GM12878 (cell line): ENCODE measurements at regions of chr16 and their contacts with region 1.

Region 1: GRCh38 chr16:15427648-15428239 is 6.6 kb upstream of the BMERB1 start:
- DNase-seq: no peak
- ATAC-seq: peak; percentile 78
- H3K4me3 ChIP-seq: no peak overlapping the region
- H3K27ac ChIP-seq: no peak overlapping the region
- H3K4me1 ChIP-seq: no peaks in the 10 kb centered on the region
- H3K27me3 ChIP-seq: no peaks in the 10 kb centered on the region
- CTCF ChIP-seq: peak; percentile 41 to 61 (median 52); a peak in 5 of 6 replicates
- EP300 ChIP-seq: no peak
- POLR2A ChIP-seq: no peak
- RAD21 ChIP-seq: peak; percentile 58

Region 2: DNA sequence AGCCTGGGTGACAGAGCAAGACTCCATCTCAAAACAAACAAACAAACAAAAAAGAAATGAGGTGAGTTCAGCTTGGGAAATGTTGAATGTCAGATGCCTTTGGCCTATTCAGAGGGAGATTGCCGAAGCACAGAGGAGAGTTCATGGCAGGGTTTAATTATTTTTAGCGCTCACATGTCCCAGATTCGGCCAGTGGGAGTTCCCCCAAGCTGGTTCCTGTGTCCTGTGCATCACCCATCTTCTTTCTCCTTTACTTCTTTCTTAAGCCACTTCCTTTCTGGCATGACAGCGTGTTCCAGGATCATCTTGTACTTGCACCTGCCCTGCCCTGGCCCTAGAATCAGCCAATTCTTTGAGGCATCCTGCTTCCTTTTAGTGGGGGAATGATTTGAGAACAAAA is 23.0 kb before region 1 on chr16:
- CTCF ChIA-PET with region 1: no interaction called
- POLR2A ChIA-PET with region 1: no interaction called
- RAD21 ChIA-PET with region 1: no interaction called
- SMC1A ChIA-PET with region 1: no interaction called
- in situ Hi-C with region 1: no loop called
- intact Hi-C with region 1: no loop called
- DNase-seq: no peak
- ATAC-seq: peak; percentile 73
- H3K4me3 ChIP-seq: no peak overlapping the region
- H3K27ac ChIP-seq: peak overlapping the region; percentile 8; the same call in 1 of the 2 replicates
- H3K4me1 ChIP-seq: peaks cover 10% of the 10 kb centered on the region
- H3K27me3 ChIP-seq: no peaks in the 10 kb centered on the region
- CTCF ChIP-seq: no peak
- EP300 ChIP-seq: no peak
- POLR2A ChIP-seq: no peak
- RAD21 ChIP-seq: no peak

Region 3: DNA sequence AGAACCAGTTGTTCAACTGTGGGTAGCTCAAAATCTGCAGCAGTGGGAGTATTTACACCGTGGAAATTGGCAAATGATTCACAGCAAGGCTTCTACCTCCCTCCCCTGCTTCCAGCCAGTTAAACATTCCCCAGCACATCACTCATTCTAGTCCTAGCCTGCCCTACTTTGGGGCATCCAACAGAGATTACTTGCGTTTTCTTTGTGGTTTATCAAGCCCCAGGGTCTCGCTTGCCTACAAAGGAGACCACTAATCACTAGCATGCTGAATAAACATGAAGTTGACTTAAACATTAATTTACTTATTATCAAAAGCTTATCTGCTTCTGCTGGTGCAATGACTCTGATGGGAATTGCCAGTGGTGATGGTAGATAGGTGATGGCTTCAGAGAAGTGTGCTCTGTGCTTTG is 120.7 kb after region 1 on chr16:
- CTCF ChIA-PET with region 1: interaction called, 15 read pairs
- POLR2A ChIA-PET with region 1: no interaction called
- RAD21 ChIA-PET with region 1: interaction called, 3 read pairs
- SMC1A ChIA-PET with region 1: interaction called, 5 read pairs
- in situ Hi-C with region 1: no loop called
- intact Hi-C with region 1: loop called (anchors 1 kb)
- DNase-seq: peak; percentile 15
- ATAC-seq: peak; percentile 43
- H3K4me3 ChIP-seq: no peak overlapping the region
- H3K27ac ChIP-seq: no peak overlapping the region
- H3K4me1 ChIP-seq: no peaks in the 10 kb centered on the region
- H3K27me3 ChIP-seq: no peaks in the 10 kb centered on the region
- CTCF ChIP-seq: no peak
- EP300 ChIP-seq: no peak
- POLR2A ChIP-seq: no peak
- RAD21 ChIP-seq: no peak

Region 4: DNA sequence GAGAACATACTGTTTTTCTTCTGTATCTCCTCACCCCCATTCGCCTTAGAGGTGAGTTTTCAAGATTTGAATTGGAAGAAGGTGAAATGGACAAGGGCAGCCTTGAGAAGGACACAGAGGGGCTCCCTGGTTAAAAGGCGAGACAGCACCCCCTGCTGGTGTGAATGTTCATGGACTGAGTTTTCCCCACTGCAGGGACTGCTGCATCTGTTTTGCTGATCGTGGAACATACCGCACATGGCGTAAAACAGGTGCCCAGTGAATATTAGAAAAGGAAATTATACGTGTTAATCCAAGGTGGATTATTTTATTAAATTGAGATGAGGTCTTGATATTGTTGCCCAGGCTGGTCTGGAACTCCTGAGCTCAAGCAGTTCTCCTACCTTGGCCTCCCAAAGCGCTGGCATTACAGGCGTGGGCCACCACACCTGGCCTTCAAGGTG is 276.8 kb after region 1 on chr16:
- CTCF ChIA-PET with region 1: interaction called, 5 read pairs
- POLR2A ChIA-PET with region 1: no interaction called
- RAD21 ChIA-PET with region 1: no interaction called
- SMC1A ChIA-PET with region 1: no interaction called
- in situ Hi-C with region 1: no loop called
- intact Hi-C with region 1: loop called (anchors 10 kb)
- DNase-seq: no peak
- ATAC-seq: peak; percentile 92
- H3K4me3 ChIP-seq: no peak overlapping the region
- H3K27ac ChIP-seq: no peak overlapping the region
- H3K4me1 ChIP-seq: no peaks in the 10 kb centered on the region
- H3K27me3 ChIP-seq: no peaks in the 10 kb centered on the region
- CTCF ChIP-seq: peak; percentile 76 to 80 (median 79)
- EP300 ChIP-seq: no peak
- POLR2A ChIP-seq: peak; percentile 9; the same call in 1 of the 2 replicates
- RAD21 ChIP-seq: peak; percentile 69

Region 5: GRCh38 chr16:15757630-15758251 is 330.0 kb after region 1 on chr16:
- CTCF ChIA-PET with region 1: interaction called, 5 read pairs
- POLR2A ChIA-PET with region 1: interaction called, 3 read pairs
- RAD21 ChIA-PET with region 1: interaction called, 4 read pairs
- SMC1A ChIA-PET with region 1: no interaction called
- in situ Hi-C with region 1: no loop called
- intact Hi-C with region 1: loop called (anchors 5 kb)
- DNase-seq: no peak
- ATAC-seq: no peak
- H3K4me3 ChIP-seq: no peak overlapping the region
- H3K27ac ChIP-seq: no peak overlapping the region
- H3K4me1 ChIP-seq: no peaks in the 10 kb centered on the region
- H3K27me3 ChIP-seq: no peaks in the 10 kb centered on the region
- CTCF ChIP-seq: no peak
- EP300 ChIP-seq: no peak
- POLR2A ChIP-seq: no peak
- RAD21 ChIP-seq: no peak